PC-3 (cell line): ENCODE measurements at regions of chr3 and their contacts with region 1.

Region 1: GRCh38 chr3:169149349-169149890 is 514.1 kb downstream of the MECOM start:
- DNase-seq: peak; percentile 92
- ATAC-seq: peak; percentile 76
- H3K4me3 ChIP-seq: peak overlapping the region; percentile 73
- H3K27ac ChIP-seq: peak overlapping the region; percentile 12
- H3K4me1 ChIP-seq: peaks cover 33% of the 10 kb centered on the region
- H3K27me3 ChIP-seq: no peaks in the 10 kb centered on the region
- CTCF ChIP-seq: peak; percentile 87

Region 2: GRCh38 chr3:168865022-168865551 is 284.3 kb before region 1 on chr3:
- CTCF ChIA-PET with region 1: interaction called, 10 read pairs
- POLR2A ChIA-PET with region 1: interaction called, 8 read pairs
- intact Hi-C with region 1: no loop called
- DNase-seq: peak; percentile 80
- ATAC-seq: no peak
- H3K4me3 ChIP-seq: no peak overlapping the region
- H3K27ac ChIP-seq: no peak overlapping the region
- H3K4me1 ChIP-seq: peaks cover 7% of the 10 kb centered on the region
- H3K27me3 ChIP-seq: no peaks in the 10 kb centered on the region
- CTCF ChIP-seq: peak; percentile 82

Region 3: DNA sequence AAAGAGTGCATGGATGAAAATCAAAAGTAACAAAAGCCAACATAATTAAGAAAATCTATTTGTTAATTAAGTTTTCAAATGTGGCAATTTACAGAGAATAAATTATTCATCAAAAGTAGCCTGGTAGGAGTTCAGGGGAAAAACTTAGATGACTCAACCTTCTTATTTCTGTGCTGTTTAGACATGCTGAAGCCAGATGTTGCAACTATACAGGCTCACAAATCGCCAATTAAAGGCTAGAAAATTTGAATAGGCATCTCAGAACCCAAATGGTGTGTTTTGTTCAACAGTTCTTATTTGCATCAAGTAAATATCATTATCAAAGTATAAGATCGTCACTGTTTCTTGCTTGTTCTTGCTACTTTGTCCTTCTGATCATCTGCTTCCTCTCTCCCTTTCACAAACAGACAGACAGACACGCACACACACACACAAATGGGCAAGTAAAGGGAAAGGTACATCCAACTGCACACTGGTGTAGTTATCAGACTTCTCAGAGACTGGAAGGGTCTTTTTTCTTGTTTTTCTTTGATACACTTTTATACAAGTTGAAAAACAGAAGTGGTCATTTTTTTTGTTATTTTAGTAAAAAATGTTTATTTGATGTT is 58.1 kb before region 1 on chr3:
- CTCF ChIA-PET with region 1: no interaction called
- POLR2A ChIA-PET with region 1: no interaction called
- intact Hi-C with region 1: no loop called
- DNase-seq: no peak
- ATAC-seq: no peak
- H3K4me3 ChIP-seq: no peak overlapping the region
- H3K27ac ChIP-seq: no peak overlapping the region
- H3K4me1 ChIP-seq: peaks cover 1% of the 10 kb centered on the region; the same call in 1 of the 2 replicates
- H3K27me3 ChIP-seq: no peaks in the 10 kb centered on the region
- CTCF ChIP-seq: no peak

Region 4: GRCh38 chr3:169133178-169134161 is 15.9 kb before region 1 on chr3:
- CTCF ChIA-PET with region 1: interaction called, 8 read pairs
- POLR2A ChIA-PET with region 1: no interaction called
- intact Hi-C with region 1: loop called (anchors 1 kb)
- DNase-seq: peak; percentile 63
- ATAC-seq: peak; percentile 67
- H3K4me3 ChIP-seq: no peak overlapping the region
- H3K27ac ChIP-seq: no peak overlapping the region; the same call in 1 of the 2 replicates
- H3K4me1 ChIP-seq: peaks cover 23% of the 10 kb centered on the region
- H3K27me3 ChIP-seq: no peaks in the 10 kb centered on the region
- CTCF ChIP-seq: peak; percentile 80

Region 5: DNA sequence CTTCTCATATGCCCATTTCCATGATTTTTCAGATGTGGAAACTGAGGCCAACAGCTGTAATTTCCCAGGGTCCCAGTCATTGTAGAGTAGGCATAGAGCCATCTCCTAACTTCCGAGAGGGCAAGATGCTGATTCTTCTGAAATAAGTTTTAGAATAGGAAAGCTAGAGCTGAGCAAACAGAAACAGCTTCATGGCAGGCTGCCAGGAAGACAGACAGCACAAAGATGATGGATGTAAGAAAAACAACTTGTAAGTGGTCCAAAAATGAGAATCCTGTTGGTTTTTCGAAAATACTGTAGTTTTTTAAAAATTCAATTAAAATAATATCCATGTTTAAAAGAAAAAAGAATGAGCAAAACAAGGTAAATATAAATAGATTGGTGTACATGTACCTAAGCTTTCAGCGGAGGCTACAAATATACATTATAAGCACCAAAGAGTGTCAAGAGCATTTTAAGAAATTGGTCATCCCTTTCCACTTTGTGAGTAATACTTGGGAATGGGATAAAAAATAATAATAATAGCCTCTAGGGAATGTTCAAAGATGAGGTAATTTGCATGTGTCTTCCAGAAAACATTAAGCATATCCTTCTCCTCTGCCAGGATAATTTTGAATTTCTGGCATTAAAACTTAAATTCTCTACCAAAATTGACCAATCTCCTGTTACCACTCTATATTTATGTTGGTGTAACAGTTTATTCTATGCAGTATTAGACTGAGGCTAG is 107.5 kb after region 1 on chr3:
- CTCF ChIA-PET with region 1: no interaction called
- POLR2A ChIA-PET with region 1: no interaction called
- intact Hi-C with region 1: no loop called
- DNase-seq: no peak
- ATAC-seq: no peak
- H3K4me3 ChIP-seq: no peak overlapping the region
- H3K27ac ChIP-seq: no peak overlapping the region
- H3K4me1 ChIP-seq: no peaks in the 10 kb centered on the region
- H3K27me3 ChIP-seq: no peaks in the 10 kb centered on the region
- CTCF ChIP-seq: no peak

Region 6: DNA sequence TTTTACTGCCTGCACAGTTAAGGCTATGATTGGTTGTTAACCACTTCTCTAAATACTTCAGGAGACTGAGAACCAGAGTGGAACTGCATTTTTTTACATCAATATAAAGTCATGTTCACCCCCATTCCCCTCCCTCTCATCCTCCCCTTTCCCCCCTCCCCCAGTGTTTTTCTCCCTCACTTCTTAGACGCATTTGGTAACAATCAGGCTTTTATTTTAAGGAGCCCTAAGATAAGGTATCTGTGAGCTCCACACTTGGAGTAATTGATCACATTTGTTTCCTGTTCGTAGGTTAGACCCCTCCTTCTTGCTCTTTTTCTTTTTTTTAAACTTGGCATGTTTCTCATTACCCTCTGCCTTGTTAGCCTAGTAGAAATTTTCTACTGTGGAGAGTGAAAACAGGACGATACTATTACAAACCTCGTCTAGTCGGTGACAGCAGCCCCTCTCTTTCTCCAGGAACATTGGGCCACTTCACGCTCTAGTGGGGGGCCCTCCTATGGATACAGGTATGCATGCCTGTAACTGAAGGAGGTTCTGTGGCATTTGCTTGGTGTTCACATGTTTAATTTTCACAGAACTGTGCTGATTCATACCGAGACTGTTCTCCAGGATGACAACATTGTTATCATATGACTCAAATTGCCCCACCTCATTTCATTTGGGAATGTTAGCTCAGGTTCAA is 199.7 kb after region 1 on chr3:
- CTCF ChIA-PET with region 1: interaction called, 3 read pairs
- POLR2A ChIA-PET with region 1: interaction called, 6 read pairs
- intact Hi-C with region 1: loop called (anchors 2 kb)
- DNase-seq: peak; percentile 97
- ATAC-seq: peak; percentile 85
- H3K4me3 ChIP-seq: peak overlapping the region; percentile 47
- H3K27ac ChIP-seq: peak overlapping the region; percentile 89
- H3K4me1 ChIP-seq: peaks cover 52% of the 10 kb centered on the region
- H3K27me3 ChIP-seq: no peaks in the 10 kb centered on the region
- CTCF ChIP-seq: no peak

Region 7: GRCh38 chr3:169430707-169431404 is 281.4 kb after region 1 on chr3:
- CTCF ChIA-PET with region 1: interaction called, 7 read pairs
- POLR2A ChIA-PET with region 1: no interaction called
- intact Hi-C with region 1: loop called (anchors 2 kb)
- DNase-seq: peak; percentile 89
- ATAC-seq: peak; percentile 93
- H3K4me3 ChIP-seq: peak overlapping the region; percentile 18; the same call in 1 of the 2 replicates
- H3K27ac ChIP-seq: peak overlapping the region; percentile 89
- H3K4me1 ChIP-seq: peaks cover 41% of the 10 kb centered on the region
- H3K27me3 ChIP-seq: no peaks in the 10 kb centered on the region
- CTCF ChIP-seq: no peak

Region 8: DNA sequence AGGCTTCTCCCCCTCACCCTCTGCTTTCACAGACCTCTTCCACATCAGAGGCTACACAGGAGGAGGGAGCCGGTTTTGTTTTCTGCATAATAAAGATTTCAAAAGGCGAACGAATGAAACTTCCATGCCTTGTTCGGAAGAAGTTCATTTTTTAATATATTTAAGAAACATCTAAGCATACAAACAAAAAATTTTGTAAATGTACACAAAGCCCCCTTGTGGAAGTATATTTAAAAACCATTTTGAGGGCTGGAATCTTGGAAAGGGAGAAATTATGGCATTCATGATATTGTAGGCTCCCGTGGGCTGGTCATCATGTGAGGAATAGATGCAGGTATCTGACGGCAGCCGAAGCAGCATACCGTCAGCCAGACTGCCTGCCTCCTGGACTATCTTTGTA is 423.7 kb after region 1 on chr3:
- CTCF ChIA-PET with region 1: no interaction called
- POLR2A ChIA-PET with region 1: no interaction called
- intact Hi-C with region 1: loop called (anchors 5 kb)
- DNase-seq: peak; percentile 48
- ATAC-seq: no peak
- H3K4me3 ChIP-seq: no peak overlapping the region
- H3K27ac ChIP-seq: no peak overlapping the region
- H3K4me1 ChIP-seq: peaks cover 13% of the 10 kb centered on the region
- H3K27me3 ChIP-seq: no peaks in the 10 kb centered on the region
- CTCF ChIP-seq: peak; percentile 57